Heart left ventricle (tissue), 16 donors: ENCODE measurements at regions of chr20 and their contacts with region 1.

Region 1: GRCh38 chr20:45436732-45437391 is 20.9 kb downstream of the PIGT start:
- DNase-seq: peak; percentile 88 to 94 (median 90)
- ATAC-seq: peak; percentile 95 to 97 (median 96)
- H3K4me3 ChIP-seq: peak overlapping the region; percentile 39 to 77 (median 62)
- H3K27ac ChIP-seq: peak overlapping the region in 11 of 12 donors; percentile 65 to 85 (median 73)
- H3K4me1 ChIP-seq: peaks cover 0 to 15% (median 7%) of the 10 kb centered on the region in 12 donors
- H3K27me3 ChIP-seq: no peaks in the 10 kb centered on the region
- CTCF ChIP-seq: peak; percentile 93 to 100 (median 96)
- POLR2A ChIP-seq: peak in 1 of 2 donors; percentile 36

Region 2: DNA sequence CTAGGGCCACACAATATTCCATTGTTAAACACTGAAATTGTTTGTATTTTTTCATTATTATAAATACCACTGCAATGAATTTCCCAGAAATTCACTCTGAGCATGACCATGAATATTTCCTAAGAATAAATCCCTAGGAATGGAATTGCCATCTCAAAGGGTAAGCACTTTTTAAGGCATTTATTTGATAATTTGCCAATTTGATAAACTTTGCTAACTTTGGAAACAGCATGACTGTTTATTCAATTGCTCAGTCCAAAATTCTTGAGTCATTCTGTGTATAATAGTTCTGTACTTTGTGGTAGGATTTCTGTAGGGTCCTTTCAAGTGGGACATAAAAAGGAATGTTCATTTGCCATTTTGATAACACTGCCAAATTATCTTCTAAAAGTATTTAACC is 1566.4 kb before region 1 on chr20:
- intact Hi-C with region 1: no loop called
- DNase-seq: no peak
- ATAC-seq: no peak
- H3K4me3 ChIP-seq: no peak overlapping the region
- H3K27ac ChIP-seq: no peak overlapping the region
- H3K4me1 ChIP-seq: peaks cover 0 to 2% (median 0%) of the 10 kb centered on the region in 12 donors
- H3K27me3 ChIP-seq: no peaks in the 10 kb centered on the region
- CTCF ChIP-seq: no peak
- POLR2A ChIP-seq: no peak

Region 3: DNA sequence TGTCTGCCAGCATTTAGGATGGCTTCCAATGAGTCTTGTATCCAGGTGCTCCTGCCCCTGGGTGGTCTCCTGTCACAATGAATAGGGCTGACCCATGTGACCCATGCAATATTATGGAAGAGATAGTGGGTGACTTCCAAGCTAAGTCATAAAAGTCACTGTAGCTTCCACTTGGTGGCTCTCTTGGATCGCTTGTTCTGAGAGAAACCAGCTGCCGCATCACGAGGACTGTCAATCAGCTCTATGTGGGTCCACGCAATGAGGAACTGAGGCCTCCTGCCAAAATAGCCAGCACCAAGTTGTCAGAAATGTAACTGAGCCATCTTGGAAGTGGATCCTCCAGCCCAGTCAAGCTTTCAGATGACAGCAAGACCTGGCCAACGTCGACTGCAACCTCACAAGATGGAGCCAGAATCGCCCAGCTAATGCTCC is 113.9 kb before region 1 on chr20:
- intact Hi-C with region 1: loop called (anchors 1 to 5 kb)
- DNase-seq: peak in 4 of 5 donors; percentile 63 to 80 (median 74)
- ATAC-seq: peak; percentile 77 to 82 (median 80)
- H3K4me3 ChIP-seq: no peak overlapping the region
- H3K27ac ChIP-seq: peak overlapping the region in 2 of 12 donors; percentile 41 to 42
- H3K4me1 ChIP-seq: peaks cover 0 to 22% (median 0%) of the 10 kb centered on the region in 12 donors
- H3K27me3 ChIP-seq: peaks cover 0 to 2% (median 0%) of the 10 kb centered on the region in 9 donors
- CTCF ChIP-seq: peak; percentile 17 to 63 (median 46)
- POLR2A ChIP-seq: no peak

Region 4: GRCh38 chr20:45406259-45407066 is 30.4 kb before region 1 on chr20:
- intact Hi-C with region 1: loop called in 1 of 10 experiments (anchors 2 kb)
- DNase-seq: peak; percentile 90 to 92 (median 91)
- ATAC-seq: peak; percentile 5 to 67 (median 49)
- H3K4me3 ChIP-seq: peak overlapping the region; percentile 69 to 98 (median 84)
- H3K27ac ChIP-seq: peak overlapping the region; percentile 96 to 100 (median 99)
- H3K4me1 ChIP-seq: peaks cover 0 to 52% (median 30%) of the 10 kb centered on the region in 12 donors
- H3K27me3 ChIP-seq: peaks cover 0 to 5% (median 0%) of the 10 kb centered on the region in 9 donors
- CTCF ChIP-seq: peak in 3 of 12 donors; percentile 24 to 50 (median 44)
- POLR2A ChIP-seq: peak in 1 of 2 donors; percentile 69

Region 5: GRCh38 chr20:45484676-45485075 is 47.8 kb after region 1 on chr20:
- intact Hi-C with region 1: no loop called
- DNase-seq: no peak
- ATAC-seq: no peak
- H3K4me3 ChIP-seq: no peak overlapping the region
- H3K27ac ChIP-seq: no peak overlapping the region
- H3K4me1 ChIP-seq: no peaks in the 10 kb centered on the region
- H3K27me3 ChIP-seq: peaks cover 0 to 62% (median 17%) of the 10 kb centered on the region in 9 donors
- CTCF ChIP-seq: no peak
- POLR2A ChIP-seq: no peak

Region 6: GRCh38 chr20:45765980-45766379 is 329.1 kb after region 1 on chr20:
- intact Hi-C with region 1: loop called in 3 of 10 experiments (anchors 5 to 10 kb)
- DNase-seq: no peak
- ATAC-seq: no peak
- H3K4me3 ChIP-seq: no peak overlapping the region
- H3K27ac ChIP-seq: no peak overlapping the region
- H3K4me1 ChIP-seq: peaks cover 0 to 3% (median 2%) of the 10 kb centered on the region in 12 donors
- H3K27me3 ChIP-seq: no peaks in the 10 kb centered on the region
- CTCF ChIP-seq: no peak
- POLR2A ChIP-seq: no peak